ENCODE measurements at regions of chr5 and their contacts with region 1.

Region 1: DNA sequence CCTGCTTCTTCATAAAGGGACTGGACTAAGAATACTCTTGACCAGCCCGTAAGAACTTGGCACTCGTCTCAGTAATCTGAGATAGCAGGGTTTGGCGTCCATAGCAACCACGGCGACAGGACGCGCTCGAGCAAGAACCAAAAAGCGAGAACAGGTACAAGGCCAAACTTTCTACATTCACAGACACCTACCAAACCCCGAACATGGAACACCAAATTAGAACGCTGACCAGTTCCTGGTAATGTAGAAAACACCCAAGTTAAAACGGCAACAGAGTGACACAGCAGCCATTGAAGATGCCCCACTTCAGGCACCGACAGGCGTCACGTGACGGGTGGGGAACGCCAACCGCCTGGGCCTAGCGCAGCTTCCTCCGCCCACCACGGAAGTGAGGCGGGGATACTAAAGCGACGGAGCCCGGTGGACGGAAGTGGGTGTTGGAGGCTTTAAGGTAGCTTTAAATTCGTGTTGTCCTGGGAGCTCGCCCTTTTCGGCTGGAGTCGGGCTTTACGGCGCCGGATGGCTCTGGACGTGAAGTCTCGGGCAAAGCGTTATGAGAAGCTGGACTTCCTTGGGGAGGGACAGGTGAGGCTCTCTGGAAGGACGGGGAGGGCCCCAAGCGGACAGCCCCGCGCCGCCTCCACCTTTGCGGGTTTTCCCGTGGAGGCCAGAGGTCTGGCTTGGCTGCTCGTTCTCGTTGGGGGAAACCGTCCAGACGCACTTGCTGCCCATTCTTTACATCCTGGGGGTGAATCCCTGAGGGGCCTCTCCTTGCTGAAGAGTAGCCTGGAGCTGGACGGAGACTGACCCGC is at the start of gene CDK7:
- DNase-seq: peak; percentile 91 to 98 (median 97)

Region 2: DNA sequence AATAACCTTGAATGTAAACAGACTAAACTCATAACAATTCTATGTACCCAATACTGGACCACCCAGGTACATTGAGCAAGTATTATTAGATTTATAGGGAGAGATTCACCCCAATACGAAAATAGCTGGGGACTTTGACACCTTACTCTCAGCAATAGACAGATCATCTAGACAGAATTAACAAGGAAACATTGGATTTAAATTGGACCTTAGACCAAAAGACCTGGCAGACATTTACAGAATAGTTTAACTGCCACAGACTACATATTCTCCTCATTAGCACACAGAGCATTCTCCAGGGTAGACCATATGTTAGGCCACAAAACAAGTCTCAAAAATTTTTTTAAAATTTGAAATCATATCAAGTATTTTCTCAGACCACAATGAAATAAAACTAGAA is 621.7 kb before region 1 on chr5:
- intact Hi-C with region 1: no loop called
- DNase-seq: no peak

Region 3: DNA sequence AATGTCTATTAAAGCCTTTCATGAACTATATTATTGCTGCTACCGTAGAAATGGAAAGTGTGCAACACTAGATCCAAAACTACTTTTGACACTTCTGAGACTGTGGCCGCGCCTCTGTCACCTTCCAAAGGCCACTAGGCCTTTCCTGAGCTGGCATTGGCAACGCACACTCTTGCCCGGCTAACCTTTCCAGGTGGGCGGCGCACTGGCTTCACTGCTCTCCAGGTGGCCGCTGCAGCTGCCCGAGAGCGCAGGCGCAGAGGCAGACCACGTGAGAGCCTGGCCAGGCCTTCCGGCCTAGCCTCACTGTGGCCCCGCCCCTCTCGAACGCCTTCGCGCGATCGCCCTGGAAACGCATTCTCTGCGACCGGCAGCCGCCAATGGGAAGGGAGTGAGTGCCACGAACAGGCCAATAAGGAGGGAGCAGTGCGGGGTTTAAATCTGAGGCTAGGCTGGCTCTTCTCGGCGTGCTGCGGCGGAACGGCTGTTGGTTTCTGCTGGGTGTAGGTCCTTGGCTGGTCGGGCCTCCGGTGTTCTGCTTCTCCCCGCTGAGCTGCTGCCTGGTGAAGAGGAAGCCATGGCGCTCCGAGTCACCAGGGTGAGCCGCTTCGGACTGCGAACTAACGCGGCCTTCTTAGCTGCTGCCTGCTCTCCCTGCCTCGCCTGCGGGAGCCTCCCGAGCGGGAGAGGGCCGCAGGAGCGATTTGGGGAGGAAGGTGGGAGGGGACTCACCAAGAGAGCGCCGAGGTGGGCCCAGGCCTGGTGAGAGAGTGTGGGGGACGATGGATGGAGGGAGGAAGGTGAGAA is 67.8 kb before region 1 on chr5 and contains the start of gene CCNB1:
- intact Hi-C with region 1: loop called (anchors 5 kb)
- DNase-seq: peak; percentile 97 to 100 (median 99)

Region 4: GRCh38 chr5:69217548-69218526 is 16.8 kb before region 1 on chr5:
- intact Hi-C with region 1: loop called (anchors 1 kb)
- DNase-seq: peak; percentile 91 to 98 (median 97)

Region 5: GRCh38 chr5:69334793-69335268 is 100.2 kb after region 1 on chr5:
- intact Hi-C with region 1: loop called (anchors 10 kb)
- DNase-seq: peak; percentile 78 to 93 (median 85)

Region 6: GRCh38 chr5:69369369-69370121 is 134.9 kb after region 1 on chr5 and contains the starts of genes AK6, RAD17 and TAF9:
- intact Hi-C with region 1: loop called (anchors 5 kb)
- DNase-seq: peak; percentile 91 to 98 (median 95)

Measured in head of caudate nucleus (tissue), 42 donors.